ENCODE measurements at regions of chr11 and their contacts with region 1.

Region 1: GRCh38 chr11:95398437-95399112 is 167.6 kb upstream of the SESN3 start:
- DNase-seq: no peak
- ATAC-seq: no peak
- H3K4me3 ChIP-seq: no peak overlapping the region
- H3K4me3 Mint-ChIP-seq: no peak overlapping the region
- H3K27ac ChIP-seq: no peak overlapping the region
- H3K27ac Mint-ChIP-seq: no peak overlapping the region
- H3K4me1 ChIP-seq: no peaks in the 10 kb centered on the region
- H3K4me1 Mint-ChIP-seq: no peaks in the 10 kb centered on the region
- H3K27me3 ChIP-seq: no peaks in the 10 kb centered on the region
- H3K27me3 Mint-ChIP-seq: no peaks in the 10 kb centered on the region
- CTCF ChIP-seq: no peak

Region 2: GRCh38 chr11:95337175-95337957 is 61.2 kb before region 1 on chr11:
- CTCF ChIA-PET with region 1: no interaction called
- POLR2A ChIA-PET with region 1: no interaction called
- intact Hi-C with region 1: loop called in 1 of 2 experiments (anchors 10 kb)
- DNase-seq: peak in 8 of 9 experiments; percentile 1 to 63 (median 20)
- ATAC-seq: peak; percentile 55
- H3K4me3 ChIP-seq: peak overlapping the region in 1 of 2 experiments; percentile 16
- H3K4me3 Mint-ChIP-seq: no peak overlapping the region
- H3K27ac ChIP-seq: peak overlapping the region in 1 of 2 experiments; percentile 38
- H3K27ac Mint-ChIP-seq: no peak overlapping the region
- H3K4me1 ChIP-seq: no peaks in the 10 kb centered on the region
- H3K4me1 Mint-ChIP-seq: peaks cover 2% of the 10 kb centered on the region
- H3K27me3 ChIP-seq: no peaks in the 10 kb centered on the region
- H3K27me3 Mint-ChIP-seq: no peaks in the 10 kb centered on the region
- CTCF ChIP-seq: no peak

Region 3: DNA sequence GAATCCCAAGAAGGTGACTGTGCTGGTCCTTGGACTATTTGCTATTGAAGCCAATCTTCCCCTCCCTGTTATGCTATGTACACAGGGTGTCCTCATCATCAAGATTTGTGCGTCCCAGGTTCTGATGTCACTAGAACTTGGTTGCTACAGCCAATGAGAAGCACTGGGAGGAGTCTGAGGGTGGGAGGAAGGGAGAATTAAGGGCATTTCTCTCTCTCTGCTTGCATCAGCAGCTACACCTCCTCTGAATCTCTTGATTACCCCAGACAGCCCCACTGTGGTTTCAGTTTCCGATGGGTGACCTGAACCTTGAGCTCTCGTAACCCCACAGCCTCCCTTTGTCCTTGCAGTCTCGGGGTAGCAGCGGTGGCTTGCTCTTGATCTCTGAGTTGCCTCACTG is 44.8 kb after region 1 on chr11:
- CTCF ChIA-PET with region 1: no interaction called
- POLR2A ChIA-PET with region 1: no interaction called
- intact Hi-C with region 1: no loop called
- DNase-seq: peak in 3 of 9 experiments; percentile 23 to 64 (median 27)
- ATAC-seq: peak; percentile 55
- H3K4me3 ChIP-seq: no peak overlapping the region
- H3K4me3 Mint-ChIP-seq: no peak overlapping the region
- H3K27ac ChIP-seq: no peak overlapping the region
- H3K27ac Mint-ChIP-seq: no peak overlapping the region
- H3K4me1 ChIP-seq: peaks cover 4% of the 10 kb centered on the region
- H3K4me1 Mint-ChIP-seq: peaks cover 8% of the 10 kb centered on the region
- H3K27me3 ChIP-seq: no peaks in the 10 kb centered on the region
- H3K27me3 Mint-ChIP-seq: no peaks in the 10 kb centered on the region
- CTCF ChIP-seq: no peak

Measured in CD8-positive, alpha-beta T cell (primary cell).